IMR-90 (cell line): ENCODE measurements at regions of chr10 and their contacts with region 1.

Region 1: DNA sequence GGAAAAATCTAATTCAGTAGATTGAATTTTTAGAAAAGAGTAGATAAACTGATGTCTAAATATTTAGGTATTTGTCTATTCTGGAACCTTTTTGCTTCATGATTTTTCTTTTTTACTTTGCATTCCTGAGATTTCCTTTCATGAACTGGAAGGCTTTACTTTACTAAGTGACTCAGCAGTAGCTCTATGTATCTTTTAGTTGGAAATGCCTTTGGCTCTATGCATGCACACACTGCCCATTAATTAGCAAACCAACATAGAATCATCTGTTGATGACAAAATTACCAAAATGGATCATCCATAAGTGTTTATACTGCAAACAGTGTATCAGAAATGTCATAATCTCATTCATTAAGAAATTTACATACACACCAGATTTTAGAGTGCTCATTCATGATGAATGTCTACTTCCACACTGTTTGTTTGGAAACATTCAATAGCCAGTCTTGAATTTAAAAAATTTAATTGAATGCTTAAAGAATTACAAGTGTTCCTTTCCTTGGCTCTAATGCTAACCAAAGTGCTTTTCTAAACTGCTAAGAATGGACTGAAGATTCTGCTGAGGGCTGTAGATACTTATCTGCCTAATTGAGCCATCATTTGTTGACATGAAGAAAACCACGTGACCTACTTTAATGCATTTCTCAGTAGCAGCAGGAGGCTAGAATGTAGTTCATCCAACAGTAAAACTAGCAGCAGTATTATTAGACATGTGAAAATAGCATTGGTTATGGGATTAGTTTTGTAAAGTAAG is 282.0 kb downstream of the ADK start:
- DNase-seq: peak; percentile 70
- ATAC-seq: peak; percentile 88
- H3K4me3 ChIP-seq: no peak overlapping the region
- H3K27ac ChIP-seq: peak overlapping the region; percentile 59; the same call in 1 of the 2 replicates
- H3K4me1 ChIP-seq: no peaks in the 10 kb centered on the region; the same call in 1 of the 2 replicates
- H3K27me3 ChIP-seq: no peaks in the 10 kb centered on the region
- CTCF ChIP-seq: no peak
- POLR2A ChIP-seq: no peak
- RAD21 ChIP-seq: 0 out of 2 replicates have a peak, but pooled peaks have one; percentile 3

Region 2: GRCh38 chr10:74262856-74263255 is 170.2 kb before region 1 on chr10:
- CTCF ChIA-PET with region 1: no interaction called
- POLR2A ChIA-PET with region 1: no interaction called
- dilution Hi-C with region 1: no loop called
- in situ Hi-C with region 1: no loop called
- intact Hi-C with region 1: no loop called
- DNase-seq: no peak
- ATAC-seq: no peak
- H3K4me3 ChIP-seq: no peak overlapping the region
- H3K27ac ChIP-seq: no peak overlapping the region
- H3K4me1 ChIP-seq: peaks cover 2% of the 10 kb centered on the region; the same call in 1 of the 2 replicates
- H3K27me3 ChIP-seq: no peaks in the 10 kb centered on the region
- CTCF ChIP-seq: no peak
- POLR2A ChIP-seq: no peak
- RAD21 ChIP-seq: no peak

Region 3: DNA sequence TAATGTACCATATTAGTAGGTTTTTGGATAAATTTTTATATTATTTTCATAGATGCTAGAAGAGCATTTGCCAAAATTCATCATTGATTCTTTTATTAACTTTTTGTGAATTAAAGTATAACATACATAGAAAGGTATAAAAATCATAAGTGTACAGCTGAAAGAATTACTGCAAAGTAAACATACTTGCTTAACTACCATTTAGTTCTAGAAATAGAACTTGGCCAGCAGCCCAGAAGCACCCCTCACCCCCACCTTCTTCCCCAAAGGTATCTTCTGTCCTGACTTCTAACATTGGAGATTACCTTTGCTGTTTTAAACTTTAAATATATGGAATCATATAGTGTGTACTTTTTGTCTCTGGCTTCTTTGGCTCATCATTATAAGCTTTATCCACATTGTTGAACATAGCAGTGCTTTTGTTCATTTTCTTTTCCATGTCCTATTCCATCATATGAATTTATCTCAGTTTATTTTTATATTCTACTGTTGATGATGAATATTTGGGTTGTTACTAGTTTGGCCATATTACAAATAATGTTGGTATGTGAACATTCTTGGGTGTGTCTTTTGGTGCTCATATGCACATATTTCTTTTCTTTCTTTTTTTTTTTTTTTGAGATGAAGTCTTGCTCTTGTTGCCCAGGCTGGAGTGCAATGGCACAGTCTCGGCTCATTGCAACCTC is 139.2 kb before region 1 on chr10:
- CTCF ChIA-PET with region 1: no interaction called
- POLR2A ChIA-PET with region 1: no interaction called
- dilution Hi-C with region 1: no loop called
- in situ Hi-C with region 1: no loop called
- intact Hi-C with region 1: loop called (anchors 5 kb)
- DNase-seq: peak; percentile 84
- ATAC-seq: peak; percentile 75
- H3K4me3 ChIP-seq: no peak overlapping the region
- H3K27ac ChIP-seq: peak overlapping the region; percentile 95; the same call in 1 of the 2 replicates
- H3K4me1 ChIP-seq: peaks cover 8% of the 10 kb centered on the region
- H3K27me3 ChIP-seq: no peaks in the 10 kb centered on the region
- CTCF ChIP-seq: no peak
- POLR2A ChIP-seq: no peak
- RAD21 ChIP-seq: no peak

Region 4: GRCh38 chr10:74542065-74542464 is 109.0 kb after region 1 on chr10:
- CTCF ChIA-PET with region 1: no interaction called
- POLR2A ChIA-PET with region 1: no interaction called
- dilution Hi-C with region 1: no loop called
- in situ Hi-C with region 1: no loop called
- intact Hi-C with region 1: loop called (anchors 5 kb)
- DNase-seq: peak; percentile 93
- ATAC-seq: peak; percentile 91
- H3K4me3 ChIP-seq: no peak overlapping the region
- H3K27ac ChIP-seq: peak overlapping the region; percentile 58; the same call in 1 of the 2 replicates
- H3K4me1 ChIP-seq: peaks cover 7% of the 10 kb centered on the region; the same call in 1 of the 2 replicates
- H3K27me3 ChIP-seq: no peaks in the 10 kb centered on the region
- CTCF ChIP-seq: no peak
- POLR2A ChIP-seq: no peak
- RAD21 ChIP-seq: no peak